Cardiac septum (tissue), 1 donor: ENCODE measurements at regions of chr17 and their contacts with region 1.

Region 1: GRCh38 chr17:68457539-68458259 is 403 bp upstream of the WIPI1 start:
- DNase-seq: peak; percentile 100

Region 2: DNA sequence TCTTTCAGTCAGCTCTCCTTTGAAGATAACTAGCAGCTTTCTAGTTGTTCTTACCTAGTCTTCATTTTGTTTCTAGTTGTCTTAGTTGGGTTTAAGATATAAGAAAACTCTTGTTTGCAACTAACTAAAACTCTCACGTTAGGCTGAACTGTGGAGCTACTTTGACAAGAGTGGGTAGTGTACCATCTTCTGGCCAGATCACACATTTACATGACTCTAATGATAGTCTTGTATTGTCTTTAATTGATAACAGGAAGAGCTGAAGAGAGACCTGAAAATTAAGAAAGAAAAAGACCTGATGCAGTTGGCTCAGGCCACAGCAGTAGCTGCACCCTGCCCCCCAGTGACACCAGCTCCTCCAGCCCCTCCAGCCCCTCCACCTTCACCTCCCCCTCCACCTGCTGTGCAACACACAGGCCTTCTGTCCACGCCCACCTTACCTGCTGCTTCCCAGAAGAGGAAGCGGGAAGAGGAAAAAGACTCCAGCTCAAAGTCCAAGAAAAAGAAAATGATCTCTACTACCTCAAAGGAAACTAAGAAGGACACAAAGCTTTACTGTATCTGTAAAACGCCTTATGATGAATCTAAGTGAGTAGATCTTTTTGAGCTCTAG is 498.3 kb before region 1 on chr17:
- intact Hi-C with region 1: loop called (anchors 5 kb)
- DNase-seq: no peak

Region 3: DNA sequence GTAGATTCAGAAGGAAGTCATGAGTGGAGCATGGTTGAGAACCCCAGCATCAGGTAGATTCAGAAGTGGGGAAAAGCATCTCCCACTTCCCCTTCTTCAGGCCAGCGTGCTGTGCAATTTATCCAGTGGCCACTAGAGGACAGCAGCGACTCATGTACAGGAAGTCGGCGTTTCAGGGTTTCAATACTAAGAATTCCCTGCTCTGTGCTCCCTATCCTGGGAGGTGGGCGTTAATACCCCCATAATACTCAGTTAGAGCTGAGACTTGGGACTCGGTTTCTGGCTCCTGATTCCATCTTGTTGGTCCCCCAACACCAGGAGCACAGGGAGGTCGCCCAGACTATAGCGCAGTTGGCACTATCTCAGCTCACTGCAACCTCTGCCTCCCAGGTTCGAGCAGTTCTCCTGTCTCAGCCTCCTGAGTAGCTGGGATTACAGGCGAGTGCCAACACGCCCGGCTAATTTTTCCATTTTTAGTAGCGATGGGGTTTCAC is 285.2 kb before region 1 on chr17:
- intact Hi-C with region 1: loop called (anchors 5 kb)
- DNase-seq: no peak

Region 4: GRCh38 chr17:68205251-68205807 is 252.4 kb before region 1 on chr17:
- intact Hi-C with region 1: loop called (anchors 5 kb)
- DNase-seq: peak; percentile 98

Region 5: GRCh38 chr17:68247445-68248198 is 210.1 kb before region 1 on chr17 and contains the start of gene AMZ2:
- intact Hi-C with region 1: loop called (anchors 5 kb)
- DNase-seq: peak; percentile 98
- total RNA-seq, gene AMZ2: 97.4 TPM

Region 6: GRCh38 chr17:68260051-68260762 is 197.5 kb before region 1 on chr17:
- intact Hi-C with region 1: loop called (anchors 2 kb)
- DNase-seq: no peak